Posterior cingulate gyrus (tissue), 11 donors: ENCODE measurements at regions of chr3 and their contacts with region 1.

Region 1: GRCh38 chr3:167380004-167380689 is at the start of gene ZBBX:
- DNase-seq: peak; percentile 84 to 98 (median 92)

Region 2: DNA sequence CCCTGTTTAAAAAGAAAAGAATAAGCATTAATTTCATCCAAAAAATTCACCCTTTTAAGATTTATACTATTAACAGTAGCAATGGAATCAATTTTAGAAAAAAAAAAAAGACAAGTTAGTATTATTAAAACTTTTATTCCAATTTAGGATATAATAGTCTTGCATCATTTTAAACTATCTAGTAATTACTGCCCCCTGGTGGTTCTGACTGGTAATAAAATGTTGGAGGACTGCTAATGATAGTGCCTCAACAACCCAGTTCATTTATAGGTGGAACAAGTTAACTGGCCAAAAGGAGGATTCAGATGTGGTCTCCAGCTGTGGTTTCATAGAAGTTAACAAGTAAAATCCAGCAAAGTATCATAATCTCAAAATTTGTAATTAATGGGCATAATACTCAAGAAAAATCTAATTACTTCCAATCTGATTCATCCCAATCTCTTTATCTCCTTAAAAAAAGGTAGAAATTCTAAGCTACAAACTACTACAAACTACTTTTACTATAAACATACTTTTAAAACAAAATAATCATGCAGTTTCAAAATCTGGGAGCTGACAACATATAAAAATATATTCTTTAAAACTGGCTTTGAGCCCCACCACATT is 304.3 kb after region 1 on chr3:
- intact Hi-C with region 1: loop called (anchors 5 kb)
- DNase-seq: peak in 1 of 10 donors; percentile 41

Region 3: DNA sequence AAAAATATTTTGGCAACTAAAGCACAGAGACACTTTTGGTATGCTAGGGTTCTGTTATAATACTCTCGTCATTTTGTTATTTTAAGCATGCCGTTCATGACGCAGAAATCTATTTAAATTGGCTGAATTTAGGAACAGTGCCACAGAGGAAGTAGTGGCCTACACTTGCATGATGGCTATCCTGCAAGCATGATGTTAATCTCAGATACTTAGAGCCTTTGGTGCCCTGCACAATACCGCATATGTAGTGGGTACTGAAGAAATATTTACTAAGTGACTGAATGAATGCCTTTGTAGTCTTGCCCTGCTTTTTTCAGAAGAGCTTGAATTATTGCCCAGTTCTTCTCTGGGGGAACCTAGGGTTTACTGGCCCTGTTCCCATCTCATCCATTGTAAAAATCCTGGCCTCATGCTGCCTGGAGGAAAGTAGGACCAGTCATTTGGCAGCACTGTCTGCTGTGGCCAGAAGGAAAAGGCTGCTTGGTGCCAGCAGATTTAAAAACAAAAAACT is 434.3 kb after region 1 on chr3:
- intact Hi-C with region 1: no loop called
- DNase-seq: peak in 7 of 10 donors; percentile 40 to 90 (median 54)